AG04450 (cell line): ENCODE measurements at regions of chr10 and their contacts with region 1.

Region 1: GRCh38 chr10:101467286-101467770 is 113.4 kb downstream of the BTRC start:
- DNase-seq: peak; percentile 34
- H3K4me3 ChIP-seq: no peak overlapping the region
- H3K27ac ChIP-seq: no peak overlapping the region
- H3K27me3 ChIP-seq: no peaks in the 10 kb centered on the region
- CTCF ChIP-seq: peak; percentile 94

Region 2: GRCh38 chr10:101291331-101292193 is 175.8 kb before region 1 on chr10:
- CTCF ChIA-PET with region 1: interaction called, 34 read pairs
- POLR2A ChIA-PET with region 1: no interaction called
- DNase-seq: no peak
- H3K4me3 ChIP-seq: peak overlapping the region; percentile 48
- H3K27ac ChIP-seq: no peak overlapping the region
- H3K27me3 ChIP-seq: peaks cover 77% of the 10 kb centered on the region
- CTCF ChIP-seq: peak; percentile 62

Region 3: GRCh38 chr10:101353692-101354327 is 113.5 kb before region 1 on chr10 and contains the start of gene BTRC:
- CTCF ChIA-PET with region 1: interaction called, 16 read pairs
- POLR2A ChIA-PET with region 1: no interaction called
- DNase-seq: peak; percentile 99
- H3K4me3 ChIP-seq: peak within 1 kb of the TSS; percentile 92
- H3K27ac ChIP-seq: peak within 1 kb of the TSS; percentile 77
- H3K27me3 ChIP-seq: peaks cover 1% of the 10 kb centered on the region
- CTCF ChIP-seq: no peak
- polyA plus RNA-seq, gene BTRC: 16.6 and 23.2 TPM in 2 replicates

Region 4: DNA sequence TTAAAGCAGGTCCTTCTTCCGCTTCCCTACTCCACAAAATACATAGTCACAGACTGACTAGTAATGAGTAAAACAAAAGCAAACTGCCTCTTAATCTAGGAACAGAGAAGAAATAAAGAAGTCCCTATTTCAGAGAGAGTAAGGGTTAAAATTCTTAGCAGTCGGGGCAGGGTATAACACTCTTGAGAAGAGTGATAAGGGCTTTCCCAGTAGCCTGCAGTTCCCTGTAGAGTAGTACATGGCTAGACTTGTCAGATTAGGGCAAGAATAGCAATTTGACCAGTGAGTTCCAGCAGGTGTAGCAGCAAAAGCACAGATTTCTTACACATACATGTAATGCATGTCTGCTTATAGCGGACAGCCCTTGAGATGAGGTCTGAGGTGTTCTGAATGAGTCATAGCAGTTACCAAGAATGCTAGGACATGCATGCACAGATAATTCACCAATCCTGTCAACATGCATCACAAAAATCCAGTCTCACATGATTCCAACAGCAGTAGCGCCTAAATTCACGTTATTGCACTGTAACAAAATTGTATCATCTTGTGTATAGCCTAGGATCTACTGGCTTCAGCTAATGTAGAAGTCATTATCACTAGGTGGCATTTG is 72.7 kb before region 1 on chr10:
- CTCF ChIA-PET with region 1: interaction called, 12 read pairs
- POLR2A ChIA-PET with region 1: no interaction called
- DNase-seq: no peak
- H3K4me3 ChIP-seq: no peak overlapping the region
- H3K27ac ChIP-seq: no peak overlapping the region
- H3K27me3 ChIP-seq: no peaks in the 10 kb centered on the region
- CTCF ChIP-seq: no peak

Region 5: GRCh38 chr10:101453791-101454718 is 13.3 kb before region 1 on chr10:
- CTCF ChIA-PET with region 1: interaction called, 68 read pairs
- POLR2A ChIA-PET with region 1: no interaction called
- DNase-seq: no peak
- H3K4me3 ChIP-seq: no peak overlapping the region
- H3K27ac ChIP-seq: no peak overlapping the region
- H3K27me3 ChIP-seq: no peaks in the 10 kb centered on the region
- CTCF ChIP-seq: no peak

Region 6: GRCh38 chr10:101506829-101507661 is 39.7 kb after region 1 on chr10:
- CTCF ChIA-PET with region 1: interaction called, 10 read pairs
- POLR2A ChIA-PET with region 1: no interaction called
- DNase-seq: no peak
- H3K4me3 ChIP-seq: no peak overlapping the region
- H3K27ac ChIP-seq: no peak overlapping the region
- H3K27me3 ChIP-seq: no peaks in the 10 kb centered on the region
- CTCF ChIP-seq: no peak

Region 7: DNA sequence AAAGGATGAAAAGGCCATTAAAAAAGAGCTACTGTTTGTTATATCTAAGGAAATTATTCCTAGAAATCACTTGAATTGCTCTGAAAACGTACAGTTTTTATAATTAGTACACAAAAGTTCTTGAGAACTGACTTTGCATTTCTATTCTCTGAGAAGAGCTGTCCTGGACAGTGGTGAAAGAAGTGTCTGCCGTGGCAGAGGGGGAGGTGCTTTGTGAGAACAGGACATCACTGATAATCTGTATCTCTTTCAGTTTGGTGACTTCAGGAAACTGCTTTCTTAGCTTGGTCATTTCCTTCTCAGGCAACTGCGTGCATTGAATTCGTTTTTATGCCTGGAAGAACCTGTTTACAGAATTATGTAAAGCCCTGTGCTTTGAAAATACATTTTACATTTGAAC is 68.6 kb after region 1 on chr10:
- CTCF ChIA-PET with region 1: interaction called, 11 read pairs
- POLR2A ChIA-PET with region 1: no interaction called
- DNase-seq: no peak
- H3K4me3 ChIP-seq: no peak overlapping the region
- H3K27ac ChIP-seq: no peak overlapping the region
- H3K27me3 ChIP-seq: no peaks in the 10 kb centered on the region
- CTCF ChIP-seq: no peak